Left colon (tissue), 2 donors: ENCODE measurements at regions of chr18 and their contacts with region 1.

Region 1: GRCh38 chr18:4068552-4069158 is 386.5 kb downstream of the DLGAP1 start:
- DNase-seq: peak in 1 of 2 donors; percentile 14
- ATAC-seq: no peak

Region 2: DNA sequence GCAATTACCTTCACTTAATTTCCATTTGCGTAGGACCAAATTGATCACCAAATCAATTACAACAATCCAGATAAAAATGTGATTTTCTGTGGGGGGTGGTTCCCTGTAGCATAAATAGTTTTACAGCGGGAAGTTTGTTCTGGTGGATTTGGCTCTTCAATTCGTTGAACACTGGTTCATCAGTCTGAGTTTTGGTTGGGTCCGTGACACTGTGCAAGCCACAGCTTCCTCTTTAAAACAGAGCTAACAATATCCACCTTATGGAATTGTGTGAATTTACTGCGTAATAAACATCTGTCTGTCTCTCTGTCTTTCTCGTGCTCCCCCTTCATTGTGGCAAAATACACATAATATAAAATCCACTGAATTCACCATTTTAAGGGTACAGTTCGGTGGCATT is 307.9 kb before region 1 on chr18:
- intact Hi-C with region 1: loop called in 1 of 2 experiments (anchors 10 kb)
- DNase-seq: no peak
- ATAC-seq: no peak